Activated T-helper 1 cell treated with anti-CD3 and anti-CD28 coated beads, Interleukin-12 subunit alpha, Interleukin-12 subunit beta, Interleukin-2, Interleukin-4 antibody, amounts not matched to agents 30 ng/mL and 10 ng/mL and 1 ng/mL, durations not matched to agents 14 hours and 24 hours and 36 hours (primary cell): ENCODE measurements at regions of chr16 and their contacts with region 1.

Region 1: DNA sequence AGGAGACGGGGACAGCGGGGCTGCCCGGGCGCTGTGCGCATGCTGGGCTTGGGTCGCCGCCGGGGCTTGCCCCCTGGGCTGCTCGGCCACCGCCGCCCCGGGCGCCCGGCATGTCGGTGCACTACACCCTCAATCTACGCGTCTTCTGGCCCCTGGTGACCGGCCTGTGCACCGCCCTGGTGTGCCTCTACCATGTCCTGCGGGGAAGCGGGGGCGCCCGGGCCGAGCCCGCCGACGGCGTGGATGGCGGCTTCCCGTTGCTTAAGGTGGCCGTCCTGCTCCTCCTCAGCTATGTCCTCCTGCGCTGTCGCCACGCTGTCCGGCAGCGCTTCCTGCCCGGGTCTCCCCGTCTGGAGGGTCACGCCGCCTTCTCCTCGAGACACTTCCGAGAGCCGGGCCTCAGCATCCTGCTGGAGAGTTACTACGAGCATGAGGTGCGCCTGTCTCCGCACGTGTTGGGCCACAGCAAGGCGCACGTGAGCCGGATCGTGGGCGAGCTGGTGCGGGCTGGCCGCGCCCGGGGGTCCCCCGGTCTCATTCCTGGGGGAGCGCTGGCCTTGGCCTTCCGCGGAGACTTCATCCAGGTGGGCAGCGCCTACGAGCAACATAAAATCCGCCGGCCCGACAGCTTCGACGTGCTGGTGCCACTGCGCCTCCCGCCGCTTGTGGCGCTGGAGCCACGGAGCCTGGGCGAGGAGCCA is 738 bp downstream of the ITPRIPL2 start:
- DNase-seq: no peak
- H3K4me3 Mint-ChIP-seq: peak overlapping the region; percentile 82
- H3K27ac Mint-ChIP-seq: peak overlapping the region; percentile 75
- H3K4me1 Mint-ChIP-seq: peaks cover 37% of the 10 kb centered on the region
- H3K27me3 Mint-ChIP-seq: peaks cover 19% of the 10 kb centered on the region

Region 2: DNA sequence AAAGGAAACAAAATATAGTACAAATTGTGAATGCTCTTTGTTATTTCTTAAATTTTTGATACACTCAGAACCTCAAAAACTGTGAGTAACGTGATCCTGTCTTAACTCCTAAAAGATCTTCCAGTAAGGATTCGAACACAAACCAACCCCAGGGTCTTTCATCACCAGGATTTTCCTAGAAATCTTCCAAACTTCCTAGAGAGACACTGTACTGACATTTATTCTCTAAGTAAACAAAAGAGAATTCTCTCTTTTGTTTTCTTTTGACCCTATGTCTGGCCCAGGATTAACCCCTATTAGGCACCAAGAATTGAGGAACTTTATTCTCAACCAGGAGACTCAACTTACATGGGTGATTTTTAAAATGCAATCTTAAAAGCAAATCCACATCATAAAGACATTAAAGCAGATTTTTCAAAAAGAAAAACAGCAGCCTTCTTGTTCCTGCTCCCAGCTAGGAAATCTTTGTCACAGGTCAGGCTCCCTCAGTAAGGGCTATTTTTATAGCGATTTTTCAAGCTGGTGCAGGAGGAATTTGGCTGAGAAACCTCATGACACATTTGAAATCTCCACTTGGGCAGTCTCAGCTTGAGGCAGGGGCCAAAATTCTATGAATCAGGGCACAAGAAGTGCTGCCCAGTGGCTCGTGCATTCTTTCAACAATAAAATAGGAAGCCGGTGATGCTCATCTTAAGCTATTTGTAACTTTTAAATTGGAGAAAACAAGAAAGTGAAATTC is 182.1 kb before region 1 on chr16:
- intact Hi-C with region 1: loop called (anchors 2 kb)
- DNase-seq: no peak
- H3K4me3 Mint-ChIP-seq: no peak overlapping the region
- H3K27ac Mint-ChIP-seq: no peak overlapping the region
- H3K4me1 Mint-ChIP-seq: peaks cover 24% of the 10 kb centered on the region
- H3K27me3 Mint-ChIP-seq: peaks cover 3% of the 10 kb centered on the region

Region 3: DNA sequence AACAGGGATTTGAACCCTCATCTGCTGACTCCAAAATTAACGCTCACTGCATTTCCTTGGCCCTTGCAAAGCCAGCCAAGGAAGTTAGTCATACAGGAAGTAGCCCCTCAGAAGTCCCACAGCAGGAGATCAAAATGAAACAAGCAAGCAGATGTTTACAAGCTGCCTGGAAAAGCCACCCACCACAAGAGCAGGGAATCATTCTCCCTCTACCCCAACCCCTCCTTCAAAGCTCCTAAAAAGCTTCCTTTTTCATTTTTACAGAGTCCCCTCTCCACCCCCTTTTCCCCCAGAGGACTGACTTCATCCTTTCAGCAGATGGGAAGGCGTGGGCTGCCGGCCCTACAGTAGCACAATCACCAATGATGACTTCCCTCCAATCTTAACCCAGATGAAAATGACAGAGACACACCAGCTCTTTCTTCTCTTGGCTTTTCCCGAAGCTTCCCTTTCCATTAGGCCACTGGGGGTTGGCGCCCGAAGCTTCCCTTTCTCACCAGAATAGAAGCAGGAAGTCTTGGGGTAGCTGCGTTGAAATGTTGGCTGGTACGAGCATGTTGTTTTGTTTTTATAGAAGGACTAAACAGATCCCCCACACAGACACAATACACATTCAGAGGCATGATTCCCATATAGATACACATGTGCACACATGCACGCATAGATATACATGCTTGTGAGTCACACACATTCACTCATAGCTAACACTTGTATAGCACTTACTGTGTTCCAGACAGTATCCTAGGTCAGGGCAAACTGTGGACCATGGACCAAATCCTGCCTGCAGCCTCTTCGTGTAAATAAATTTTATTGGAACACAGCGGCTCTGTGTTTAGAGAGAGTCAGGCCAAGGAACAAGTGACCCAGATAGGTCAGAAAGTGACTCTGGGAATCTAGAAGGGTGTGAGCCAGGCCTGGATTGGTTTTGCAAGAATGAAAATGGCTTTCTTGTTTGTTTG is 16.6 kb after region 1 on chr16:
- intact Hi-C with region 1: loop called (anchors 1 kb)
- DNase-seq: no peak
- H3K4me3 Mint-ChIP-seq: peak overlapping the region; percentile 62
- H3K27ac Mint-ChIP-seq: peak overlapping the region; percentile 73
- H3K4me1 Mint-ChIP-seq: peaks cover 49% of the 10 kb centered on the region
- H3K27me3 Mint-ChIP-seq: peaks cover 3% of the 10 kb centered on the region

Region 4: DNA sequence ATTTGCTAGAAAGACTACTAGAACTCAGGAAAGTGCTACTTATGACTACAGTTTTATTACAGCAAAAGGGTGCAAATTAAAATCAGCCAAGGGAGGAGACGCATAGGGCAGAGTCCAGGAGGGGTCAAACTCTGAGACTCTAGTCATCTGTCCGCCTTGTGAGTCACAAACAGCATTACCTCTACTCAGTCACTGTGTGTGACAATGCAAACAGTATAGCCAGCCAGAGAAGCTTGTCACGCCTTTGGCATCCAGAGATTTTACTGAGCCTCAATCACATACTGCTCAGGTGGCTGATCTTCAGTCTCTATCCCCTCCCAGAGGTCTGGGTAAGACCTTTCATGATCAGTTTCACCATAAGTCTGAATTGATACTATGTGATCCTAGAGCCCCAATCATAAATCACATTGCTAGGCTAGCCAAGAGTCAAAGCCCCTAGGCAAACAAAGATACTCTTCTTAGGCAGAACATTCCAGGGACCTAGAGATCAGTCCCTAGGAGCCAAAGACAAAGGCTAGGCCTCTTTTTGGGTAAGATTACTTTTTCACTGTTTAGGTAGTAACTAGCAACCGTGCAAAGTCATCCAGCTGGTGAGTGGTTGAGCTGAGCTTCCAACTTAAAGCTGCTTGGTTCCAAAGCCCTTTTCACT is 122.2 kb after region 1 on chr16:
- intact Hi-C with region 1: no loop called
- DNase-seq: no peak
- H3K4me3 Mint-ChIP-seq: no peak overlapping the region
- H3K27ac Mint-ChIP-seq: no peak overlapping the region
- H3K4me1 Mint-ChIP-seq: no peaks in the 10 kb centered on the region
- H3K27me3 Mint-ChIP-seq: no peaks in the 10 kb centered on the region

Region 5: DNA sequence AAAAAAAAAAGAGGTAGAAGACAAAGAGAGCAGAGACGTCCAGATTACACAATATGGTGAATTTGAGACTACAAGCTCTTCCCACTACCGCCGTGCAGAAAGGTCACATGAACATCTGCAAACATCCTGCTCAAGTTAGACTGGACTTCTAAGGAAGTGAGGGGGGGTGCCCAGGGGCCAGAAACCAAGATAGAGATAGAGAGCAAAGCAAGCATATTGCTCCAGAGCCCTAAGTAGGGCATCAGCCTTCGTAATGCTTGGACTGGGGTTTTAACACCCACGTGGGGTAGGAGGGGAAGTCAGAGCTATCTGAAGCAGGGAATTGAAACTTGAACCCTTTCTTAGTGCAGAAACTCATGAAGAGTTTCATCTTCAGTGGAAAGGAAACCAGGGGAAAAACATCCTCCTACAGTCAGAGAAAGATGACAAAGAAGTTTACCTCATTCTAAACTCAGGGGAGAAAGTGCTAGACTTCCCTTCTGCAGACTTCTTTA is 179.7 kb after region 1 on chr16:
- intact Hi-C with region 1: loop called (anchors 1 kb)
- DNase-seq: peak; percentile 3
- H3K4me3 Mint-ChIP-seq: peak overlapping the region; percentile 37
- H3K27ac Mint-ChIP-seq: peak overlapping the region; percentile 82
- H3K4me1 Mint-ChIP-seq: peaks cover 16% of the 10 kb centered on the region
- H3K27me3 Mint-ChIP-seq: peaks cover 3% of the 10 kb centered on the region

Region 6: GRCh38 chr16:19542138-19542821 is 427.8 kb after region 1 on chr16:
- intact Hi-C with region 1: no loop called
- DNase-seq: no peak
- H3K4me3 Mint-ChIP-seq: no peak overlapping the region
- H3K27ac Mint-ChIP-seq: no peak overlapping the region
- H3K4me1 Mint-ChIP-seq: peaks cover 6% of the 10 kb centered on the region
- H3K27me3 Mint-ChIP-seq: no peaks in the 10 kb centered on the region